ENCODE measurements at regions of chr3 and their contacts with region 1.

Region 1: GRCh38 chr3:152719264-152719663 is 115.7 kb upstream of the P2RY1 start:
- DNase-seq: no peak
- CTCF ChIP-seq: no peak

Region 2: GRCh38 chr3:152729906-152730305 is 10.6 kb after region 1 on chr3:
- CTCF ChIA-PET with region 1: interaction called, 11 read pairs
- POLR2A ChIA-PET with region 1: no interaction called
- DNase-seq: peak; percentile 12
- CTCF ChIP-seq: no peak

Region 3: DNA sequence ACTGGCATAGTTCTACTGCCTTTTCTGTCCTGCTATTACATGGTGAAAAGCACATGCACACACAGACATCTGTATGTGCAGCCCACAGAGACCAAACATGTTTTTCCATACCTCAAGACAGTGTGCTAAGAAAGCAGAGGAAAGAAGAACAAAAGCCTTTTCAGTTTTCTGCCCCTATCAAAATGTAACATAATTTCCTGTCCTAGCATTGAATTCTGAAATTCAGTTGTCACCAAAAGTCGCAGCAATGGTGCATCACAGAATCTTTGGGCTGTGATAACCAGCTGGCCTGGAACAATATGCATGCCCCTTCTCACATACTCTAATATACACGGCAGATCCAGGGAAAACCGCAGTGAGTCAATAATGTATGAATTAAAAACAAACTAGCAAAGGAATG is 289.0 kb after region 1 on chr3:
- CTCF ChIA-PET with region 1: no interaction called
- POLR2A ChIA-PET with region 1: no interaction called
- DNase-seq: no peak
- CTCF ChIP-seq: no peak